Psoas muscle (tissue), 8 donors: ENCODE measurements at regions of chr3 and their contacts with region 1.

Region 1: DNA sequence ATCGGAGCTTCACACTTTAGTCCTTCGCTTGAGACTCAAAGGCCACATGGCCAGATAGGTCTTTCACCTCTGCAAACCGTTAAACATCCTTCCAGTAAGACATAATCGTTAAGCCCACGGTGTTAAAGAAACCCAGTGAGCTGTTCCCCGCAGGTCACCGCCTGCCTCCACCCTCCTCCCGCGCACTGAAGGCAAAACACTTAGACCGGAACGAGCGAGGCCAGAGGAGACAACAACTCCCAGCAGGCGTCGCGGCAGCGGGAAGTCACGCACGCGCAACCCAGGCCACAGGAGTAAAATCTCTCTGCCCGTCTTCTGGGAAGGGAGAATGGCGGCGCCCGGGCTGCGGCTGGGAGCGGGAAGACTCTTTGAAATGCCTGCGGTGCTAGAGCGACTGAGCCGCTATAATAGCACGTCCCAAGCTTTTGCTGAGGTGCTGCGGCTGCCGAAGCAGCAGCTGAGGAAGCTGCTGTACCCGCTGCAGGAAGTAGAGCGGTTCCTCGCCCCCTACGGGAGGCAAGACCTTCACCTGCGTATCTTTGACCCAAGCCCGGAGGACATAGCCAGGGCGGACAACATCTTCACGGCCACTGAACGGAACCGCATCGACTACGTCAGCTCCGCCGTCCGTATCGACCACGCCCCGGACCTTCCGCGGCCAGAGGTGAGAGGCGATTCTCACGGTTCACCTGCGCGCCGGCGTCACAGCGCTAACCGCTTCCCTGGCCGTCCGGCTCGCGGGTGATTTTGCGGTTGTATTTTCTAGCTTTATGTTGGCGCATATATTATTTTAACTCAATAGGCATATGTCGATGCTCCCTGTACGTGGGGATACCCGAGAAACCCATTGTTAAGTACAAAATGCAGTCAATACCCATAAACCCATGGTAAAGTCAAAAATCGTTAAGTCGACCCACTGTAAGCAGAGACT is at the start of gene GTPBP8:
- DNase-seq: peak; percentile 92 to 94
- ATAC-seq: peak; percentile 97 to 99 (median 98)
- H3K4me3 ChIP-seq: peak within 1 kb of the TSS; percentile 86
- H3K27ac ChIP-seq: peak within 1 kb of the TSS; percentile 94
- H3K4me1 ChIP-seq: peaks cover 13% of the 10 kb centered on the region
- H3K27me3 ChIP-seq: no peaks in the 10 kb centered on the region
- CTCF ChIP-seq: no peak
- total RNA-seq, gene GTPBP8: 15.4 to 27.9 (median 22.9) TPM

Region 2: DNA sequence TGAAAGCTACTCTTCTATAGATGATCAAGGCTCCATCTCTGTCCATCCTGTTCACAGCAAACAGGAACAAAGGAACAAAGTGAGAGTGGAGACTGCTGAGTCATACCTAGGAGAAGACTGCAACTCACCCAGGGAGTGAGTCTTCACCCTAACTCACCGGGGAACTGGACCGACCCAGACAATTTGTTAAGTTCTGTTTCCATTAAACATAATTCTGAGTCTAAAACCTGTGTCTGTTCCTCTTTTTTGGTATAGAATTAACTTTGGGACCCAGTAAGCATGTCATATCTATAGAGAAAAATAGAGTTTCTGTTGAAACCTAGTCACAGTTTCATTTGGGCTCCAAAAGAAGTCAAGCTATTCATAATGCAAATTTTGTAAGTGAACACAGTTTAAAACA is 371.6 kb before region 1 on chr3:
- intact Hi-C with region 1: no loop called
- DNase-seq: no peak
- ATAC-seq: no peak
- H3K4me3 ChIP-seq: no peak overlapping the region
- H3K27ac ChIP-seq: no peak overlapping the region
- H3K4me1 ChIP-seq: no peaks in the 10 kb centered on the region
- H3K27me3 ChIP-seq: no peaks in the 10 kb centered on the region
- CTCF ChIP-seq: no peak

Region 3: GRCh38 chr3:112730193-112730592 is 260.7 kb before region 1 on chr3:
- intact Hi-C with region 1: no loop called
- DNase-seq: no peak
- ATAC-seq: no peak
- H3K4me3 ChIP-seq: no peak overlapping the region
- H3K27ac ChIP-seq: no peak overlapping the region
- H3K4me1 ChIP-seq: no peaks in the 10 kb centered on the region
- H3K27me3 ChIP-seq: no peaks in the 10 kb centered on the region
- CTCF ChIP-seq: no peak

Region 4: GRCh38 chr3:113018536-113019181 is 27.7 kb after region 1 on chr3:
- intact Hi-C with region 1: loop called in 1 of 2 experiments (anchors 1 kb)
- DNase-seq: no peak
- ATAC-seq: peak in 3 of 4 donors; percentile 1 to 9 (median 3)
- H3K4me3 ChIP-seq: peak overlapping the region; percentile 84
- H3K27ac ChIP-seq: peak overlapping the region; percentile 95
- H3K4me1 ChIP-seq: peaks cover 30% of the 10 kb centered on the region
- H3K27me3 ChIP-seq: no peaks in the 10 kb centered on the region
- CTCF ChIP-seq: no peak